ENCODE measurements at regions of chr4 and their contacts with region 1.

Region 1: DNA sequence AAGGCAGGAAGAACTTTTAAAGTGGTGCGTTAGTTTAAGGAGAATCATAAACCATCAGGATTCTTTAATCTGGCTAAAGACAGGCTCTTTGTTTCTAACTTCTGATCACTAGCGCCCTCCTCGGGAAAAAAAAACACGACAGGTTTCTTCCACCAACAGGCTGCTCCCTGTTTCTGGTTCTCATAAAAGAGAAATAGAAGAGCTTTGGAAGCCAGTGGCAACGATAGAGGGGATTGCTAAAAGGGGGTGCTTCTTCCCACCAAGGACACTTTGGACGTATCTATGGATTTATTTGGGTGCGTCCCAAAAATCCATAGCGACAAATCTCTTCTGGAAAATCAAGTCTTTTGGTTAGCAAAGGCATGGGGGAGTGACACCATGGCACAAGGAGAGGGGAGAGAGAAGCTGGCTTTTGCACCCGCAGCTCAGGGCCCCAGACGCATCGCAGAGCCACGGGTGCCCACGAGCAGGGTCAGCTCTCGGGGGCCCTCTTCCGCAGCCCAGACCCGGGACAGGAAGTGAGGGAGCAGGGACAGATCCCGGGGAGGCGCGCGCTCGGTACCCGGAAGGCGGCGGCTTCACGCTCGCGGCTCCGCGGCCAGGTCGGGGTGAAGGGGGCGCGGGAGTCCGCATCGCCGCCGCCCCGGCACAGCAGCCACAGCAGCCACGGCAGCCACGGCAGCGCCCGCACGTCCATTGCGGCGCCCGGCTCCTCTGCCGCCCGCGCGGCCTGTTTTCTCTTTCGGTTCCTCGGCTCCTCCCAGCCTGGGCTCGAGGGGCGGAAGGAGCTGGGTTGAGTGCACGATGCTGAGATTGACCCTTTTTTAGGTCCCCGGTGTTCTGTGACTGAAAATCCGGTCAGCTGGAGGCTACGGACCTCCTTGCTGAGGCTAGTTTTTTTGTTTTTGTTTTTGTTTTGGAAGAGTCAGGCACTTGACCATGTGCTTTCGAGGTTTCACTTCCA is at the start of gene CTSO:
- DNase-seq: peak; percentile 82 to 88 (median 83)
- ATAC-seq: peak; percentile 90
- H3K4me3 ChIP-seq: peak within 1 kb of the TSS; percentile 58
- H3K4me1 ChIP-seq: peaks cover 10% of the 10 kb centered on the region
- CTCF ChIP-seq: peak; percentile 29
- total RNA-seq, gene CTSO: 16.3 to 19.0 (median 18.7) TPM

Region 2: DNA sequence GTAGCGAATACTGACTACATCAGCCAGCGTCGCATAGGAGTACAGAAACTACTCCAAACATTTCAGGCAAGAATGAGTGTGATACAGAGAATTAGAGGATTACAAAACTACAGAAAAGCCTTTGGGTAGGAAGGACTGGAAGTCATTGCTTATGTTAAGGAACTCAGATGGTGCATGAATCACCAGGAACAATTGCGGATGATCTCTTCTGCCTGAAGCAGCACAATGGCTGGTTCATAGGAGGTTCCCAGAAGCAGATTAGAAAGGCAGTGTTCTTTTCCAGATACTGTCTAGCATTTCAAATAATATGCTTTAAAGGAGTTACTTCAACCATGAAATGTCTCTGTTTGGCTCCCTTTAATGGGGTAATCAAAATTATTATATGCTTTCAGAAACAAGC is 534.2 kb before region 1 on chr4:
- intact Hi-C with region 1: loop called in 1 of 2 experiments (anchors 10 kb)
- DNase-seq: no peak
- ATAC-seq: no peak
- H3K4me3 ChIP-seq: no peak overlapping the region
- H3K4me1 ChIP-seq: no peaks in the 10 kb centered on the region
- CTCF ChIP-seq: no peak

Region 3: DNA sequence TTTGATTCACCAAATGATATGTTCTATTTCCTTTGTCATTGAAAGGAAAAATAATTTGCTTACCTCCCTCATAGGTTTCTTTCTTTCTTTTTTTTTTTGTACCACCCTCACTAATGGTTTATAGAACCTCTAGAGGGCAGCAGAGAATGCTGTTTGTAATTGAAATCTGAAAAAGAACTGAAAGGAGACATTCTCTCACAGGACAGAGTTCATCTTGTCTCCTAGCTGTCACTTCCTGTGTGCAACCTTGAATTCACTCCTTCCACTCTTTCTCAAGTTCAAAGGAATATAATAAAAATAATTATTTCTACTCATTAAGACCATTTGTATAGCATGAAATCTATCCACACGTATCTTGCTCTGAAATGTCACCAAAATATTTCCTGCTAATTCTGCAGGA is 143.6 kb before region 1 on chr4:
- intact Hi-C with region 1: loop called (anchors 10 kb)
- DNase-seq: peak in 1 of 3 donors; percentile 21
- ATAC-seq: peak; percentile 71
- H3K4me3 ChIP-seq: no peak overlapping the region
- H3K4me1 ChIP-seq: no peaks in the 10 kb centered on the region
- CTCF ChIP-seq: peak; percentile 16

Region 4: GRCh38 chr4:156182269-156182668 is 228.8 kb after region 1 on chr4:
- intact Hi-C with region 1: no loop called
- DNase-seq: no peak
- ATAC-seq: no peak
- H3K4me3 ChIP-seq: no peak overlapping the region
- H3K4me1 ChIP-seq: no peaks in the 10 kb centered on the region
- CTCF ChIP-seq: no peak